AG04449 (cell line): ENCODE measurements at regions of chr9 and their contacts with region 1.

Region 1: DNA sequence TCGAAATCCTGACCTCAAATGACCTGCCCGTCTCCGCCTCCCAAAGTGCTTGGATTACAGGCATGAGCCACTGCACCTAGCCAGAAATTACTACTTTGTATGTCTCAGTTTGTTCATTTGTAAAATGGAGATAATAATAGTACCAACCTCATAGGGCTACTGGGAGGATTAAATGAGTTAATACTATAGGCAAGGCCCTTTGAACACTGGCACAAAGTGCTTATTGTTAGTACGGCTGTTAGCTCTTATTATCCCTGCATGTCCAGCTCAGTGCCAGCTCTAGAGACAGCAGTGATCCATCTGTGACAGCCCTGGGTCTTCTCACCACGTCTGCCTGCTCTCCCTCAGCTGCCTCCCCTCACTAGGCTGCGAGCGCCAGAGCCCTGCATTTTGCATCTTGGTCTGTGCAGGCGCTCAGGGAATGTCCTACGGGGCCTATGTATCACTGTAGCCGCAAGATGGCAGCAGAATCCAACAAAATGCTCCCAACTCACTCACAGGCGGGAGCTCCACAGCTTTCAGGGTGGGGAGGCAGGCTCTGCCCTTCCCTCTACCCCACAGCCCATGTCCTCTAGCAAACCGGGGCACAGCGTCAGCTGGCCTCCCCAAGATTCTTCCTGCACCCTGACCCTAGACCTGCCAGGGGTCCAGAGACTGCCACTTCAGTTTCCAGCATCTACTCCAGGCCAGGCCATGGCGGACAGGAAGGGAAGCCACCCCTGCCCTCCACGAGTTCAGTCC is 17.7 kb upstream of the AKNA start:
- DNase-seq: no peak
- H3K4me3 ChIP-seq: no peak overlapping the region
- CTCF ChIP-seq: peak; percentile 82

Region 2: GRCh38 chr9:114434878-114435311 is 29.4 kb after region 1 on chr9:
- CTCF ChIA-PET with region 1: interaction called, 36 read pairs
- POLR2A ChIA-PET with region 1: no interaction called
- DNase-seq: no peak
- H3K4me3 ChIP-seq: no peak overlapping the region
- CTCF ChIP-seq: peak; percentile 66

Region 3: GRCh38 chr9:114505187-114506081 is 100.0 kb after region 1 on chr9 and contains the start of gene WHRN:
- CTCF ChIA-PET with region 1: interaction called, 15 read pairs
- POLR2A ChIA-PET with region 1: no interaction called
- DNase-seq: no peak
- H3K4me3 ChIP-seq: peak within 1 kb of the TSS; percentile 70
- CTCF ChIP-seq: no peak

Region 4: GRCh38 chr9:114662081-114662989 is 256.9 kb after region 1 on chr9:
- CTCF ChIA-PET with region 1: interaction called, 67 read pairs
- POLR2A ChIA-PET with region 1: no interaction called
- DNase-seq: no peak
- H3K4me3 ChIP-seq: no peak overlapping the region
- CTCF ChIP-seq: peak; percentile 76

Region 5: GRCh38 chr9:114914139-114914538 is 508.7 kb after region 1 on chr9:
- CTCF ChIA-PET with region 1: interaction called, 10 read pairs
- POLR2A ChIA-PET with region 1: no interaction called
- DNase-seq: no peak
- H3K4me3 ChIP-seq: no peak overlapping the region
- CTCF ChIP-seq: peak; percentile 22